CD4-positive, alpha-beta memory T cell (primary cell): ENCODE measurements at regions of chr16 and their contacts with region 1.

Region 1: DNA sequence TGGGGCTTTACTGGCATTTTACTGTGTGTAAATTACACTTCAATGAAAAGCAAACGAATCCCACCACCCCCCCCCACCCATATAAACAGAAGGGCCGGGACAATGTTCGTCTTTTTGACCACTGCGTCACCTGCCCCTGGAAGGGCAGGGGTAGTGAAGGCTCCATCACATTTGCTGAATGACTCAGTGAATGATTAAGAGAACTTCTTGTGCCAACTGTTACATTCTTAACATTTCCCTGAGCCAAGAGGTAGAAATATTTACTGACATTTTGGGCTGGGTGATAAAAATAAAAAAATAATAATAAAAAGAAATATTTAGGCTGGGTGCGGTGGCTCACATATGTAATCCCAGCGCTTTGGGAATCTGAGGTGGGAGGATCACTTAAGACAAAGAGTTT is 24.1 kb downstream of the C16orf96 start:
- DNase-seq: no peak
- H3K4me3 ChIP-seq: no peak overlapping the region
- H3K4me3 Mint-ChIP-seq: no peak overlapping the region
- H3K27ac ChIP-seq: no peak overlapping the region
- H3K27ac Mint-ChIP-seq: no peak overlapping the region
- H3K4me1 ChIP-seq: no peaks in the 10 kb centered on the region
- H3K4me1 Mint-ChIP-seq: no peaks in the 10 kb centered on the region
- H3K27me3 ChIP-seq: no peaks in the 10 kb centered on the region
- H3K27me3 Mint-ChIP-seq: no peaks in the 10 kb centered on the region

Region 2: DNA sequence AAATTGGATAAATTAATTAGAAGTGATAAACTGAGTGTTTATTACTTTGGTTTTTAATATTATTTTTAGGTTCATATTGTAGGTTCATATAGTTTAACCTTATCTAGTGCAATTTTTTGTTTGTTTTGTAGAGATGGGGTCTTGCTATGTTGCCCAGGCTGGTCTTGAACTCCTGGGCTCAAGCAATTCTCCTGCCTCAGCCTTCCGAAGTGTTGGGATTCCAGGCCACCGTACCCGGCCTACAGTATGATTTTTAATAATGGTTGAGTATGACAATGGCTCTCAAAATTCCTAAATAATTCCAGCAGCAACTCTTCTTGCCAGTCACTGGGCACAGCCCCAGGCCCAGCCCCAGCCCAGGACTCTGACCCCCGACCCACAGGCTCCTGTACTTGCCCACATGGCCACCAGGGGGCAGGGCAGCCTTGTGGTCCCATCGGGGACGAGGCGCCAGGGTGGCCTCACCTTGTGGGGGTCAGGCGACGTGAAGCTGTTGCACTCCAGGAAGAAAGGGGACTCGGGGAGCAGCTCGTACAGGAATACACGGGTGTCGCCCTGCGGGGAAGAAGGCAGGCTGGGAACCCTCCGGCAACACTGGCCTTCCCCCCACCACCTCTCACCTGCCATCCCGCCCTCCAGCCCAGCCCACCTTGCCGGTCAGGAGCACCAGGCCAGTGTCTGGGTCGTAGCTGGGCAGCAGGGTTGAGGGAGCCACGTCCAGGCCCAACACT is 221.2 kb before region 1 on chr16:
- CTCF ChIA-PET with region 1: no interaction called
- POLR2A ChIA-PET with region 1: no interaction called
- intact Hi-C with region 1: loop called (anchors 1 kb)
- DNase-seq: peak in 4 of 5 donors; percentile 49 to 60 (median 58)
- H3K4me3 ChIP-seq: no peak overlapping the region
- H3K4me3 Mint-ChIP-seq: no peak overlapping the region
- H3K27ac ChIP-seq: no peak overlapping the region
- H3K27ac Mint-ChIP-seq: peak overlapping the region; percentile 68 to 92 (median 81)
- H3K4me1 ChIP-seq: no peaks in the 10 kb centered on the region
- H3K4me1 Mint-ChIP-seq: peaks cover 0 to 3% (median under 1%) of the 10 kb centered on the region in 4 donors
- H3K27me3 ChIP-seq: no peaks in the 10 kb centered on the region
- H3K27me3 Mint-ChIP-seq: no peaks in the 10 kb centered on the region